Ovary (tissue), 10 donors: ENCODE measurements at regions of chrX and their contacts with region 1.

Region 1: DNA sequence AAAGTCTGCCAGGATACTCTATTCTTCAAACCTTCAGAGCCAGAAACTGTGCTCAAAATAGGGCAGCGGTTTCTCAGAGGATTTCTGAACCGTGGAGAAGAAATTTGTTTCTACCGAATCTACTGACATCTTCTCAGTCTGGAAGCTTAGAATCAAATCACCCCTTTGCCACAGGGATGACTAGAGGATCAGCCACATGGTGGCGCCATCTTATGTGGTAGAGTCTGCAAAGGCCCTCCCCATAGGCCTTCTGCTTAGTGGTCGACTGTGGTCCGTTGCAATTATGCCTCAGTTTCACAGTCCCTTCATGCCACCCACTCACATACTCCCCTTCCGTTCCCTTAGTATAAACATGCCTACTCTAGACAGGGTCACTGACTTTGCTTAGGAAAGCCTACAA is 680.7 kb upstream of the SPANXN1 start:
- DNase-seq: no peak
- H3K4me3 ChIP-seq: no peak overlapping the region
- H3K27ac ChIP-seq: no peak overlapping the region
- H3K4me1 ChIP-seq: no peaks in the 10 kb centered on the region
- H3K27me3 ChIP-seq: no peaks in the 10 kb centered on the region
- CTCF ChIP-seq: no peak
- EP300 ChIP-seq: no peak
- POLR2A ChIP-seq: no peak

Region 2: GRCh38 chrX:143058120-143058519 is 1508.5 kb before region 1 on chrX:
- intact Hi-C with region 1: loop called in 1 of 4 experiments (anchors 5 kb)
- DNase-seq: no peak
- H3K4me3 ChIP-seq: no peak overlapping the region
- H3K27ac ChIP-seq: no peak overlapping the region
- H3K4me1 ChIP-seq: no peaks in the 10 kb centered on the region
- H3K27me3 ChIP-seq: no peaks in the 10 kb centered on the region
- CTCF ChIP-seq: no peak
- EP300 ChIP-seq: no peak
- POLR2A ChIP-seq: no peak

Region 3: GRCh38 chrX:144531877-144532276 is 34.7 kb before region 1 on chrX:
- intact Hi-C with region 1: no loop called
- DNase-seq: no peak
- H3K4me3 ChIP-seq: no peak overlapping the region
- H3K27ac ChIP-seq: no peak overlapping the region
- H3K4me1 ChIP-seq: no peaks in the 10 kb centered on the region
- H3K27me3 ChIP-seq: no peaks in the 10 kb centered on the region
- CTCF ChIP-seq: no peak
- EP300 ChIP-seq: no peak
- POLR2A ChIP-seq: no peak

Region 4: DNA sequence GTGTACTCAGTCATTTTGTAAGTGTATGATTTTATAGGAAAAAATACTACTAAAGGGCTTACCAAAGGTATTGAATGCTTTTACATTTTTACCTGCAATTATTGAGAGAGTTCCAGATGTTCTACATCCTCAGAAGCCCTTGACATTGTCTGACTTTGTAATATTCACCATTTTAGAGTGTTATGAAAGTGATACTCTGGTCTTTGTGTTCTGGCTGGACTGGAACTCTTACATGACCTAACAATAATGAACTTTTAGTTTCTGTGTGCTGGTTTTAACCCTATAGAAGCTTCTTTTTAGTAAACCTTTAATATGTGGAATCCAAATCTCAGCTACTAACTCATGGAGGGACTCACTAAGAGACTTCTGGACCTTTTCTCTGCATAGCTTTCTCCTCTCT is 201.9 kb after region 1 on chrX:
- intact Hi-C with region 1: no loop called
- DNase-seq: no peak
- H3K4me3 ChIP-seq: no peak overlapping the region
- H3K27ac ChIP-seq: no peak overlapping the region
- H3K4me1 ChIP-seq: no peaks in the 10 kb centered on the region
- H3K27me3 ChIP-seq: no peaks in the 10 kb centered on the region
- CTCF ChIP-seq: no peak
- EP300 ChIP-seq: no peak
- POLR2A ChIP-seq: no peak

Region 5: GRCh38 chrX:145002771-145003170 is 436.2 kb after region 1 on chrX:
- intact Hi-C with region 1: no loop called
- DNase-seq: no peak
- H3K4me3 ChIP-seq: no peak overlapping the region
- H3K27ac ChIP-seq: no peak overlapping the region
- H3K4me1 ChIP-seq: no peaks in the 10 kb centered on the region
- H3K27me3 ChIP-seq: no peaks in the 10 kb centered on the region
- CTCF ChIP-seq: no peak
- EP300 ChIP-seq: no peak
- POLR2A ChIP-seq: no peak